CD8-positive, alpha-beta T cell (primary cell): ENCODE measurements at regions of chr14 and their contacts with region 1.

Region 1: DNA sequence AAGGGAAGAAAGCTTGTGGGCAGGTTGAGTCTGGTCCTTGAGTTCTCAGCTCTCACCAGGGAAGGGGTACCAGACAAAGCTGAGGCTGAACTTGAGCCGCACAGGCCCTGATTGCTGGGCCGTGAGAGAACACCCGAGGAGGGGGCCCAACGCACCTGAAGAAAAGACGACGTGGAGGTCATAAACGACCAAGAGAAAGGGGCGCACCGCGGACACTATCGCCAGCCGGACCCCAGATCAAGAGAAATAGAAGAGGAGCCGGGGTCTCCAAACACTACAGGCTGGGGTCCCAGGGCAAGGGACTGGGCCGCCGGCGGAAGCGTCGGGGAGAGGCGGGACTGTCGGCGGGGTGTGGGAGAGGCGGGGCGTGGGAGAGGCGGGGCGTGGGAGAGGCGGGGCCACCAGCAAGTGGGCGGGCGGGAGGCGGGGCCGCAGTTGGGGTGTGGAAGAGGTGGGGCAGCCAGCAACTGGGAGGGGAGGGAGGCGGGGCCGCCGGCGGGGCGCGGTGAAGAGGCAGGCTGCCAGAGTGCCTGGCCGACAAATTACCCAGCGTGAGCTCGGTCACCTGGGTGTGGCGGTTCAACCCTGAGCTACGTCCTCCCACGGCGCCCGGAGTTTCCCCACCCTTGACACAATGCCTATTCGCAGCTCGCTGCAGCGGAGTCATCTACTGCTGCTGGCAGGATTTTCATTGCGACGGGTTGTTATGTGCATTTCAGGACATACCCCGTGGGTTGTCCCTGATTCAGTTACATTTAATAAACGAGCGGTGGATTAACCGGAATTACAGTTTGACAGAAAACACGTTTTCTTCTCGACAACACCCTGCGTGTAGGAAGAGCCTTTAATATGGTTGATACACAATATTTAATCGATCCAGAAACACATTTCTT is 15.5 kb upstream of the NEMF start:
- DNase-seq: peak; percentile 95 to 99 (median 98)
- ATAC-seq: peak; percentile 83
- H3K4me3 ChIP-seq: peak overlapping the region; percentile 57 to 61
- H3K4me3 Mint-ChIP-seq: peak overlapping the region; percentile 91
- H3K27ac ChIP-seq: peak overlapping the region; percentile 79 to 94
- H3K27ac Mint-ChIP-seq: peak overlapping the region; percentile 92
- H3K4me1 ChIP-seq: peaks cover 34% of the 10 kb centered on the region
- H3K4me1 Mint-ChIP-seq: peaks cover 22% of the 10 kb centered on the region
- H3K27me3 ChIP-seq: no peaks in the 10 kb centered on the region
- H3K27me3 Mint-ChIP-seq: no peaks in the 10 kb centered on the region
- CTCF ChIP-seq: no peak

Region 2: GRCh38 chr14:49732896-49733295 is 135.2 kb before region 1 on chr14:
- CTCF ChIA-PET with region 1: no interaction called
- POLR2A ChIA-PET with region 1: no interaction called
- intact Hi-C with region 1: no loop called
- DNase-seq: no peak
- ATAC-seq: no peak
- H3K4me3 ChIP-seq: no peak overlapping the region
- H3K4me3 Mint-ChIP-seq: no peak overlapping the region
- H3K27ac ChIP-seq: no peak overlapping the region
- H3K27ac Mint-ChIP-seq: no peak overlapping the region
- H3K4me1 ChIP-seq: no peaks in the 10 kb centered on the region
- H3K4me1 Mint-ChIP-seq: no peaks in the 10 kb centered on the region
- H3K27me3 ChIP-seq: no peaks in the 10 kb centered on the region
- H3K27me3 Mint-ChIP-seq: no peaks in the 10 kb centered on the region
- CTCF ChIP-seq: no peak

Region 3: DNA sequence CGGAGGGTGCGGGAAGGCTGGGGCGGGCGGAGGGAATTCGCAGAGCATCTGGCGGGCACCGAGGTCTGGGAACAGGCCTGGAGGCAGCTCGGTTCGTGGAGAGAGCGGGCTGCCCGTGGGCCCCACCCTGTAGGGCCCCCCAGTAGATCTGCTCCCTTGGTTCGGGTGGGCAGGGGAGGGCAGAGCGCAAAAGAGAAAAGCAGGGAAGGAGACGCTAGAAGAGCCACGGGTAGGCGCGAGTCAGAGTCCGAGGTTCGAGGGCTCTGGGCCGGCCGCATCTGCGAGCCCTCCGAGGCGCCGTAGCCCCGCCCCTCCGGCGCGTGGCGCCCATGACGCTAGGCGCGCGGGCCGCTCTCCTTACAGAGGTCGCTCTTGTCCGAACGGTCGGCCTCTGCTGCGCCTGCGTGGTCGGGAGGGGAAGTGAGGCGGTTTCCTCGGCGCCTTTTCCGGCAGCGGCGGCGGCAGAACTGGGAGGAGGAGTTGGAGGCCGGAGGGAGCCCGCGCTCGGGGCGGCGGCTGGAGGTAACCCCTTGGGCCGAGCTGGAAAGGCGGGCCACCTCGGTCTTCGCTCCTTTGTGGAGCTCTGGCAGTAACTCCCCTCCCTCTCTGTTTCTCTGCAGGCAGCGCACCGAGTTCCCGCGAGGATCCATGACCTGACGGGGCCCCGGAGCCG is 24.7 kb after region 1 on chr14 and contains the start of gene ARF6:
- CTCF ChIA-PET with region 1: interaction called, 33 read pairs
- POLR2A ChIA-PET with region 1: interaction called, 33 read pairs
- intact Hi-C with region 1: loop called (anchors 1 kb)
- DNase-seq: peak; percentile 90 to 98 (median 97)
- ATAC-seq: peak; percentile 76
- H3K4me3 ChIP-seq: peak within 1 kb of the TSS; percentile 87 to 92
- H3K4me3 Mint-ChIP-seq: peak within 1 kb of the TSS; percentile 97
- H3K27ac ChIP-seq: peak within 1 kb of the TSS; percentile 98 to 99
- H3K27ac Mint-ChIP-seq: peak within 1 kb of the TSS; percentile 98
- H3K4me1 ChIP-seq: peaks cover 27% of the 10 kb centered on the region
- H3K4me1 Mint-ChIP-seq: peaks cover 30% of the 10 kb centered on the region
- H3K27me3 ChIP-seq: no peaks in the 10 kb centered on the region
- H3K27me3 Mint-ChIP-seq: no peaks in the 10 kb centered on the region
- CTCF ChIP-seq: no peak
- total RNA-seq, gene ARF6: 60.9 to 62.5 TPM

Region 4: GRCh38 chr14:49977126-49977841 is 109.2 kb after region 1 on chr14:
- CTCF ChIA-PET with region 1: interaction called, 19 read pairs
- POLR2A ChIA-PET with region 1: interaction called, 24 read pairs
- intact Hi-C with region 1: loop called in 1 of 2 experiments (anchors 10 kb)
- DNase-seq: peak in 6 of 9 experiments; percentile 24 to 65 (median 36)
- ATAC-seq: peak; percentile 79
- H3K4me3 ChIP-seq: peak overlapping the region in 1 of 2 experiments; percentile 24
- H3K4me3 Mint-ChIP-seq: peak overlapping the region; percentile 60
- H3K27ac ChIP-seq: peak overlapping the region; percentile 34 to 61
- H3K27ac Mint-ChIP-seq: peak overlapping the region; percentile 94
- H3K4me1 ChIP-seq: peaks cover 65% of the 10 kb centered on the region
- H3K4me1 Mint-ChIP-seq: peaks cover 84% of the 10 kb centered on the region
- H3K27me3 ChIP-seq: no peaks in the 10 kb centered on the region
- H3K27me3 Mint-ChIP-seq: no peaks in the 10 kb centered on the region
- CTCF ChIP-seq: no peak

Region 5: DNA sequence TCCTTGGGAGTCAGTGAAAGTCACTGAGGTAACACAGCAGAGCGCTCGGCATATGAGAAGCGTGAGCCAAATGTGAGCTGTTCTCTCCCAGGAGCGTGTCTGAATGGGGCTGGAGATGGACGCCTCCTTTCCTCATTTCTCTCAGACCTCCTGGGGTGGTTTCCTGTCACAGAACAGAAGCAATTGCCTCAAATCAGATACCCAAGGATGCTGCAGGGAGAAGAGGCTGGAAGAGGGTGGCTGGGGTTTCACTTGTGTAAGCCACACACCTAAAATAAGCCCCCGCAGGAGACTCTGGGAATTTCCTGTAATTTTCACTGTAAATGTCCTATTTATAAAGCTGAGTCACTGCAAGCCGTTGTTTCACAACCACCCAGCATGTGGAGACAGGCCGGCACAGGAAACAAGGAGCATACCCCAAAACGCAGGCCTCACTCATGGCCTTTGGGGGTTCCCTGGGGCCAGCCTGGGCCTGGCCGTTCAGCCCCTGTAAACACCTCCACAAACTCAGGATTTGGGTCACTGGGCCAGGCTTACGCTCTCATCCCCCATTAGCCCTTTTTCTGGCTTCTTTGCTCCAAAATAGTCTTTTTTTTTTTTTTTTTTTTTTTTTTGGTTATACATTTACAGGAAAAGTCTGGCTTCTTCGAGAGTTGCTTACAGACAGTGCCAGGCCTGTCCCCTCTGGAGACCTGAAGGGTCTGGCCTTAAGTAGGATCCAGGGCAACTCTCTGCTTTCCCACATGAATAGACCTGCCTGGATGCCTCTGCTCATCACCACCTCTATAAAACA is 193.0 kb after region 1 on chr14:
- CTCF ChIA-PET with region 1: interaction called, 77 read pairs
- POLR2A ChIA-PET with region 1: interaction called, 71 read pairs
- intact Hi-C with region 1: loop called (anchors 1 to 5 kb)
- DNase-seq: peak in 6 of 9 experiments; percentile 35 to 81 (median 58)
- ATAC-seq: no peak
- H3K4me3 ChIP-seq: peak overlapping the region; percentile 36 to 44
- H3K4me3 Mint-ChIP-seq: peak overlapping the region; percentile 81
- H3K27ac ChIP-seq: peak overlapping the region; percentile 82 to 93
- H3K27ac Mint-ChIP-seq: peak overlapping the region; percentile 99
- H3K4me1 ChIP-seq: peaks cover 63% of the 10 kb centered on the region
- H3K4me1 Mint-ChIP-seq: peaks cover 85% of the 10 kb centered on the region
- H3K27me3 ChIP-seq: no peaks in the 10 kb centered on the region
- H3K27me3 Mint-ChIP-seq: no peaks in the 10 kb centered on the region
- CTCF ChIP-seq: no peak

Region 6: GRCh38 chr14:50109342-50109741 is 241.3 kb after region 1 on chr14:
- CTCF ChIA-PET with region 1: interaction called, 186 read pairs
- POLR2A ChIA-PET with region 1: interaction called, 18 read pairs
- intact Hi-C with region 1: loop called (anchors 1 kb)
- DNase-seq: no peak
- ATAC-seq: no peak
- H3K4me3 ChIP-seq: no peak overlapping the region
- H3K4me3 Mint-ChIP-seq: no peak overlapping the region
- H3K27ac ChIP-seq: no peak overlapping the region
- H3K27ac Mint-ChIP-seq: no peak overlapping the region
- H3K4me1 ChIP-seq: peaks cover 1% of the 10 kb centered on the region
- H3K4me1 Mint-ChIP-seq: peaks cover 20% of the 10 kb centered on the region
- H3K27me3 ChIP-seq: no peaks in the 10 kb centered on the region
- H3K27me3 Mint-ChIP-seq: no peaks in the 10 kb centered on the region
- CTCF ChIP-seq: no peak

Region 7: GRCh38 chr14:50311975-50312733 is 444.1 kb after region 1 on chr14 and contains the starts of genes DMAC2L and L2HGDH:
- CTCF ChIA-PET with region 1: no interaction called
- POLR2A ChIA-PET with region 1: interaction called, 3 read pairs
- intact Hi-C with region 1: loop called (anchors 5 to 10 kb)
- DNase-seq: peak; percentile 67 to 95 (median 87)
- ATAC-seq: peak; percentile 88
- H3K4me3 ChIP-seq: peak within 1 kb of the TSS; percentile 65 to 72
- H3K4me3 Mint-ChIP-seq: peak within 1 kb of the TSS; percentile 95
- H3K27ac ChIP-seq: peak within 1 kb of the TSS; percentile 74 to 93
- H3K27ac Mint-ChIP-seq: peak within 1 kb of the TSS; percentile 99
- H3K4me1 ChIP-seq: peaks cover 15% of the 10 kb centered on the region
- H3K4me1 Mint-ChIP-seq: peaks cover 41% of the 10 kb centered on the region
- H3K27me3 ChIP-seq: no peaks in the 10 kb centered on the region
- H3K27me3 Mint-ChIP-seq: no peaks in the 10 kb centered on the region
- CTCF ChIP-seq: no peak
- total RNA-seq, gene DMAC2L: 16.6 to 17.8 TPM
- total RNA-seq, gene L2HGDH: 2.6 to 3.0 TPM